ENCODE measurements at regions of chr20 and their contacts with region 1.

Region 1: DNA sequence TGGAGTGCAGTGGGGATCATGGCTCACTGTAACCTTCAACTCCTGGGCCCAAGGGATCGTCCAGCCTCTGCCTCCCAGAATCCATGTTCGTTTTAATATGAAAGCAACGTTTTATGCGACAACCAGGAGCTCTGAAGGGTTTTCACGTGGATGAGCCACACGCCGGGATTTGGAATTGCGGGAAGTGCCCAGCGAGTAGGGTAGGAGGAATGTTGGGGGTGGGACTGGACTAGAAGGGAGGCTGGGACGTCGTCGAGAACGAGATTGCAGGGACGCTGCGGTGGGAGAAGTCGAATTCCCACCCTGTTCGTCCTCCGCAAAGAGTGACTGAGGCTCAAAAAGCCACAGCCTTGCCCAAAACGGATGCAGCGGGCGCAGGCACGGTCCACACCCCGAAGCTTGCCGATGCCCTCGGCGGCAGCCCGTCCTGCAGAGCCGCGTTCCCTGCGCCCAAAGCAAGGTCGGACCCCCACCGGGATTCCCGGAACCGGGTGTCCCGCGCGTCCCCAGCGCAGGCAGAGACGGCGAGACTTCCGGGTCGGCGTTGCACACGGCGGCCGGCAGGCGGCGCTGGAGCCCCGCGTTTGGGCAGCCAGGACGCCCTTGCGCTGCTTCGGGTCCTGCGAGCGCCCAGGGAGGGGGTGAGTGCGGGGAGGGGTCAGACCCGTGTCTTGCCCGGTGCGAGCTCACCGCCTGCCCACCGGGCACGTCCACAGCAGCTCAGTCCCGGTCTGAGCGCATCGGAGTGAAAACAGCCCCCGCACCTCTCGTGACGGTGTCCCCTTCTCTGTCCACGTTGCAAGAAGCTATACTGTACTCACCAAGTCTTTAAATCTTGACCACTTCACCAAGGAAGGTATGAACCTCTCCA is 87.8 kb downstream of the DHX35 start:
- DNase-seq: peak; percentile 81
- ATAC-seq: peak; percentile 89
- H3K4me3 Mint-ChIP-seq: peak overlapping the region; percentile 75
- H3K27ac Mint-ChIP-seq: peak overlapping the region; percentile 66
- H3K4me1 Mint-ChIP-seq: peaks cover 14% of the 10 kb centered on the region
- H3K27me3 Mint-ChIP-seq: peaks cover 7% of the 10 kb centered on the region

Region 2: DNA sequence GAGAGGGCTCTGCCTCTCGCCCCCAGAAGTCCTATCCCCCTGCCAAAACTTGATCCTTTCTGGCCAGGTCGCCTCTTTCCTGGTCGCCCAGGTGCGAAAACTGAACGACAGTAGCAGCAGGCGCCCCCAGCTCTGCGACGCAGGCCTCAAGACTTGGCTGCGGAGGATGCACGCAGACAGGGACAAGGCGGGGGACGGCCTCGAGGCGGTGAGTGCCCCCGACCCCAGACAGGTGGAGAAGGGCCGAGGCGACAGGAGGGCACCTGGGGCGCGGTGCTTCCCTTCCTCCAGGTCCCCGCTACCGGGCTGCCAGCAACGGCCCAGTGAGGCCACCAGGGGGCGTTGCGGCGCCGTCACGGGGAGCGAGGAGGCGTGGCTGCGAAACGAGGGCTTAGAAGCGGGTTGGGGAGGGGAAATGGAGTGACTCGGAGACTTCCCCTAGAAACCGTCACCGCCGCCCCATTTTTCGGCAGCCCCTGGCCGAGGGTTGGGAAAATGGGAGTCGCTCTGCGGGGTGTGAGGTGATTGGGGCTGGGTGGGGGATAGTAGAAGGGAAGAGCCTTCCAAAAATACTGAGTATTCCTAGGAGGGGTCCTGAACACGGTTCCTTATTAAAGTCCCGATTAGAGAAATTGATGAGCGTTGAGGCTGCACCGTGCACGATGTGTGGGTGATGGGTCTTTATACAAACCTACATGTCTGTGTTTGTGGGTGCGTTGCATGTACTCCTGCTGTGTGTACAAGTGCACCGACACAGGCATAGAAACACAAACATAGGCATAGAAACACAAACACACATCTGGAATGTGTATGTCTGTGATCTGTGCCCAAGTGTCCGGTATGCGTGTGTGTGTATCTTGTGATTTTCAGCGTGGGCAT is 403.7 kb before region 1 on chr20:
- CTCF ChIA-PET with region 1: interaction called, 34 read pairs
- DNase-seq: peak; percentile 90
- ATAC-seq: peak; percentile 98
- H3K4me3 Mint-ChIP-seq: peak overlapping the region; percentile 61
- H3K27ac Mint-ChIP-seq: peak overlapping the region; percentile 17
- H3K4me1 Mint-ChIP-seq: peaks cover 9% of the 10 kb centered on the region
- H3K27me3 Mint-ChIP-seq: peaks cover 37% of the 10 kb centered on the region

Region 3: DNA sequence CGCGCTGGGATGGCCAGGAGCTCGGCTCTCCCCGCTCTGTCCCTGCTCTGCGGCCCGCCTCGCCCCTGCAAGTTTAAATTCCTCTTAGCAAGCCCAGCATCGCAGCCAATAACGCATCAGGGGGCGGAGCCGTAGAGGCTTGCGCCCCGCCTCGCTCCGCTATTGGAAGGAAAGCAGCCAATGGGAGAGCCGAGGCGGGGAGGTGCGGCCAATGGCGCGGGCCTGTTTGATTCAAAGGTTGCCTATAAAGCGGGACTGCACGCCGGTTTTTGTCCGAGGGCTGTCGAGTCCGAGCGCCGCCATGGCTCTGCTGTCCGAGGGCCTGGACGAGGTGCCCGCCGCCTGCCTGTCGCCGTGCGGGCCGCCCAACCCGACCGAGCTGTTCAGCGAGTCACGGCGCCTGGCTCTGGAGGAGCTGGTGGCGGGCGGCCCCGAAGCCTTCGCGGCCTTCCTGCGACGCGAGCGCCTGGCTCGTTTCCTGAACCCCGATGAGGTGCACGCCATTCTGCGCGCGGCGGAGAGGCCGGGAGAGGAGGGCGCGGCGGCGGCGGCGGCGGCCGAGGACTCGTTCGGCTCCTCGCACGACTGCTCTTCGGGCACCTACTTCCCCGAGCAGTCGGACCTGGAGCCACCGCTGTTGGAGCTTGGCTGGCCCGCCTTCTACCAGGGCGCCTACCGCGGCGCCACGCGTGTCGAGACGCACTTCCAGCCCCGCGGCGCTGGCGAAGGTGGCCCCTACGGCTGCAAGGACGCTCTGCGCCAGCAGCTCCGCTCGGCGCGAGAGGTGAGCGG is 123.6 kb before region 1 on chr20 and contains the start of gene FAM83D:
- CTCF ChIA-PET with region 1: interaction called, 131 read pairs
- DNase-seq: peak; percentile 98
- ATAC-seq: peak; percentile 97
- H3K4me3 Mint-ChIP-seq: peak within 1 kb of the TSS; percentile 81
- H3K27ac Mint-ChIP-seq: peak within 1 kb of the TSS; percentile 72
- H3K4me1 Mint-ChIP-seq: peaks cover 42% of the 10 kb centered on the region
- H3K27me3 Mint-ChIP-seq: no peaks in the 10 kb centered on the region
- total RNA-seq, gene FAM83D: 23.1 to 28.4 TPM

Region 4: DNA sequence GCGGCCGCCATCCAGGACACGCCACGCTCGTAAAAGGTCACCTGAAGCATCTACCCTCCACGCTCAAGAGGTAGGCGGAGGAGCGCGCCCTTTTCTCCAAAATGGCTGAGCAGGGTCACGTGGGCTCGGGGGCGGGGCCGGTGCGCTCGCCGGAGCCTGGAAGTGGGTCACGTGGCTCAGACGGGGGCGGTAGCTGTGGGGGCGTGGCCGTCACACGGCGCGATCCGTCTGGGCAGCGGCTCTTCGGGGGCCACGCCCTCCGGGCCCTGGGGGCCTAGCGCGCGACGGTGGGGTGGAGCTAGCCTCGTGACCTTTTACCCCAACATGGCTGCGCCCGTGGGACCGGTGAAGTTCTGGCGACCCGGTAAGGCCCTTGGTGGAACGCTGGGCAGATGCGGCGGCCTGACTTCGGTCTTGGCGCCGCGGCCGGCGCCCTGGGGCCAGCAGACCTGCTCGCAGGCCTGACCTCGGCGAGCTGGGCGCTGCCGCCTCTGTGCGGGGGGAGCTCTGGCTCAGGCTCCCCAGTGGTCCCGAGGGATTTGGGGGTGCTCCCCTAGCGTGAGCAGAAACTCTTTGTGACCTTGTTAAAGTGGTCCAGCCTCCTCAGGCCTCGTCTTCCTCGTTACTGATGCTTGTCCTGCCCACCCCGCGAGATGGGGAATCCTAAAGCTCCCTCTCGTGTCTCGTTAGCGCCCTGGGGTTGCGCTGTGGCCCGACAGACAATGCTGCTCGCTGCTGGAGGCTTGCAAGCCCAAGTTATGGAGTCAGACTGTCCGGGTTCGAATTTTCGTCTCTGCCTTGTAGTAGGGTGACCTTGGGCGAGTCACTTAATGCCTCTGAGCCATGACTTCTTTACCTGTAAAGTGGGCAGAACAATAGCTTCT is 87.6 kb before region 1 on chr20 and contains the start of gene DHX35:
- CTCF ChIA-PET with region 1: interaction called, 98 read pairs
- DNase-seq: peak; percentile 99
- ATAC-seq: peak; percentile 99
- H3K4me3 Mint-ChIP-seq: peak within 1 kb of the TSS; percentile 87
- H3K27ac Mint-ChIP-seq: peak within 1 kb of the TSS; percentile 97
- H3K4me1 Mint-ChIP-seq: peaks cover 29% of the 10 kb centered on the region
- H3K27me3 Mint-ChIP-seq: no peaks in the 10 kb centered on the region
- total RNA-seq, gene DHX35: 10.5 to 12.9 TPM

Region 5: GRCh38 chr20:39025883-39026282 is 24.0 kb before region 1 on chr20:
- CTCF ChIA-PET with region 1: interaction called, 34 read pairs
- DNase-seq: peak; percentile 77
- ATAC-seq: peak; percentile 85
- H3K4me3 Mint-ChIP-seq: peak overlapping the region; percentile 49
- H3K27ac Mint-ChIP-seq: peak overlapping the region; percentile 81
- H3K4me1 Mint-ChIP-seq: peaks cover 54% of the 10 kb centered on the region
- H3K27me3 Mint-ChIP-seq: no peaks in the 10 kb centered on the region

Region 6: GRCh38 chr20:39072132-39072531 is 22.2 kb after region 1 on chr20:
- CTCF ChIA-PET with region 1: interaction called, 170 read pairs
- DNase-seq: no peak
- ATAC-seq: no peak
- H3K4me3 Mint-ChIP-seq: no peak overlapping the region
- H3K27ac Mint-ChIP-seq: no peak overlapping the region
- H3K4me1 Mint-ChIP-seq: no peaks in the 10 kb centered on the region
- H3K27me3 Mint-ChIP-seq: peaks cover 35% of the 10 kb centered on the region

Region 7: GRCh38 chr20:39089029-39089428 is 39.1 kb after region 1 on chr20:
- CTCF ChIA-PET with region 1: interaction called, 170 read pairs
- DNase-seq: no peak
- ATAC-seq: peak; percentile 55
- H3K4me3 Mint-ChIP-seq: no peak overlapping the region
- H3K27ac Mint-ChIP-seq: no peak overlapping the region
- H3K4me1 Mint-ChIP-seq: no peaks in the 10 kb centered on the region
- H3K27me3 Mint-ChIP-seq: peaks cover 11% of the 10 kb centered on the region

Region 8: DNA sequence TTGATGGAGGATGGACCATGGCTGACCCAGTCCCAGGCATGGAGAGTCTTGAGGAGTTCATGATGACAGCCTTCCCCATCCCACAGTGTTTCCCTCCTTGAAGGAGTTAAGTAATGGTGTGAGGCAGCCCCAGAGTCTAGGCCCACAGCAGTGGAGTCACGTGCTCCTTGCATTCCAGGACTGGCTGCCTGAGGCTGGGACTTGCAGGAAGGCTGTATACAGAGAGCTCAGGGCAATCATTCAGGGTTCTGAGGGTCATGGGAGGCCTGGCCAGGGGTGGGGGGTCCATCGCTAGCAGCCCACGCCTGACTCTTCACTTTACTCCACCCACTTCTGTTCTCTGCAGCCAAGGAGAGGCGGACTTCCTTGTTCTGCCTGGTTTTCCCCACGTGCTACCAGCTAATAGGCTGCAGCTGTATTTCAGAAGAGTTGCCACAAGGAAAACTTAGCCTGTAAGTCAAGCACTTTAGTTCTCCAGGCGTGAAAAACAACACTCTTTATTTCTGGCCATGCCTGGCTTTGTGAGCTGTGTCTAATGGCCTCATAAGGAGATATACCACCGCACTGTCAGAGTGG is 184.7 kb after region 1 on chr20:
- CTCF ChIA-PET with region 1: no interaction called
- DNase-seq: no peak
- ATAC-seq: no peak
- H3K4me3 Mint-ChIP-seq: no peak overlapping the region
- H3K27ac Mint-ChIP-seq: no peak overlapping the region
- H3K4me1 Mint-ChIP-seq: no peaks in the 10 kb centered on the region
- H3K27me3 Mint-ChIP-seq: peaks cover 12% of the 10 kb centered on the region

Region 9: DNA sequence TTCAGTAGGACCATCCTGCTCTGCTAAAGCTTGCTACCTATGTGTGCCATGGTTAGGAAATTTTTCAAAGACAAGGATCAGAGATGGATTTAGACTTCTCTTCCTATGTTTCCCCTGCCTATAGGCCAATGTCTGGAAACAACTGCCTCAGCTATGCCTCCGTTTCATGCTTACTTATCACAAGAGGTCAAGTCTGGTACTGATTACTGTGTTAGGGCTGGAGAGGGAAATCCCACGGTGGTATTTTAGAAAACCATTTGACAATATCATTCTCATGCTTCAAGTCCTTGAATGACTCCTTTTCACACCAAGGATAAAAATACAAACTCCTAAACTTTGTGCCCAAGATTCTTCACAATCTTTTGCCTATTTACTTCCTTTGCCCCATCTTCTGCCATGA is 396.5 kb after region 1 on chr20:
- CTCF ChIA-PET with region 1: no interaction called
- DNase-seq: no peak
- ATAC-seq: no peak
- H3K4me3 Mint-ChIP-seq: no peak overlapping the region
- H3K27ac Mint-ChIP-seq: no peak overlapping the region
- H3K4me1 Mint-ChIP-seq: no peaks in the 10 kb centered on the region
- H3K27me3 Mint-ChIP-seq: no peaks in the 10 kb centered on the region

Measured in activated CD8-positive, alpha-beta memory T cell treated with anti-CD3 and anti-CD28 coated beads, Interleukin-2, amount 10 ng/mL, durations not matched to agents 7 days and 5 days (primary cell).